GM12878 (cell line): ENCODE measurements at regions of chr2 and their contacts with region 1.

Region 1: GRCh38 chr2:64330281-64331113 is 123.5 kb upstream of the LGALSL start:
- DNase-seq: no peak
- ATAC-seq: peak; percentile 22
- H3K4me3 ChIP-seq: no peak overlapping the region
- H3K27ac ChIP-seq: no peak overlapping the region
- H3K4me1 ChIP-seq: peaks cover 41% of the 10 kb centered on the region
- H3K27me3 ChIP-seq: no peaks in the 10 kb centered on the region
- CTCF ChIP-seq: peak; percentile 82 to 92 (median 91)
- EP300 ChIP-seq: no peak
- POLR2A ChIP-seq: no peak
- RAD21 ChIP-seq: peak; percentile 97

Region 2: DNA sequence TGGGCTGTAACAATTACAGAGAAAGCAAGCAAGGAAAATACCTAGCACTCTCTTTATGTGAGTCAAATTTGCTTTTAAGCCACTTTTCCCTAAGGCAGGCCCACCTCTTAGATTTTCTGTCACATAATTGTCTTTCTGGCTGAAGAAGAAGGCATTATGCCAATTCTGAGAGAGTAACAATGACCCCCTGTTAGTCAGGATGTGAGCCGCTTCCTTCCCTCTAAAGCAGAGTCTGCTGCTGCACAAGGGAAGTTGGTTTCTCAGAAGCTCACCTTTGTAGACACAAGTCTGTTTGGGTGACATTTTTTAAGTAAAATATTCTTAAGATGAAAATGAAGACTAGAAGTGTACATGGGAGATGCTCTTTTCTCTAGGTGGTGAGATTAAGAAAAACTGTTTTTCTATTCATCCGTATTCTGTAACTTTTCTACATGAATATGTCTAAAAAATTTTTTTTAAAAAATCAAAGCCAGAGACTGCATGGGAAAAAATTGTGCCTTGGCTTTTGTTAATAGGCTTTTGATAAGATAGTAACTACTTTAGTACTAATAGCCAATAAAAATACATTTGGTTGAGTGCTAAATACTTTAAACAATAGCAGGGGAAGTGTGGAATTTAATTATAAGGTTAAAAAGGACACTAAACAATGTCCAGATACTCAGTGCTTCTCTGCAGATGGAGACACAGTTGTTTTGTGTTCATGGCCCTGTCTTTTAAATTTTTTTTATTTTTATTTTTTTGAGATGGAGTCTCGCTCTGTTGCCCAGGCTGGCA is 277.8 kb before region 1 on chr2:
- CTCF ChIA-PET with region 1: interaction called, 420 read pairs
- POLR2A ChIA-PET with region 1: interaction called, 25 read pairs
- RAD21 ChIA-PET with region 1: interaction called, 358 read pairs
- SMC1A ChIA-PET with region 1: interaction called, 333 read pairs
- in situ Hi-C with region 1: loop called (anchors 5 kb)
- intact Hi-C with region 1: loop called (anchors 1 kb)
- DNase-seq: no peak
- ATAC-seq: no peak
- H3K4me3 ChIP-seq: no peak overlapping the region
- H3K27ac ChIP-seq: no peak overlapping the region
- H3K4me1 ChIP-seq: peaks cover 25% of the 10 kb centered on the region
- H3K27me3 ChIP-seq: no peaks in the 10 kb centered on the region
- CTCF ChIP-seq: no peak
- EP300 ChIP-seq: no peak
- POLR2A ChIP-seq: no peak
- RAD21 ChIP-seq: no peak

Region 3: DNA sequence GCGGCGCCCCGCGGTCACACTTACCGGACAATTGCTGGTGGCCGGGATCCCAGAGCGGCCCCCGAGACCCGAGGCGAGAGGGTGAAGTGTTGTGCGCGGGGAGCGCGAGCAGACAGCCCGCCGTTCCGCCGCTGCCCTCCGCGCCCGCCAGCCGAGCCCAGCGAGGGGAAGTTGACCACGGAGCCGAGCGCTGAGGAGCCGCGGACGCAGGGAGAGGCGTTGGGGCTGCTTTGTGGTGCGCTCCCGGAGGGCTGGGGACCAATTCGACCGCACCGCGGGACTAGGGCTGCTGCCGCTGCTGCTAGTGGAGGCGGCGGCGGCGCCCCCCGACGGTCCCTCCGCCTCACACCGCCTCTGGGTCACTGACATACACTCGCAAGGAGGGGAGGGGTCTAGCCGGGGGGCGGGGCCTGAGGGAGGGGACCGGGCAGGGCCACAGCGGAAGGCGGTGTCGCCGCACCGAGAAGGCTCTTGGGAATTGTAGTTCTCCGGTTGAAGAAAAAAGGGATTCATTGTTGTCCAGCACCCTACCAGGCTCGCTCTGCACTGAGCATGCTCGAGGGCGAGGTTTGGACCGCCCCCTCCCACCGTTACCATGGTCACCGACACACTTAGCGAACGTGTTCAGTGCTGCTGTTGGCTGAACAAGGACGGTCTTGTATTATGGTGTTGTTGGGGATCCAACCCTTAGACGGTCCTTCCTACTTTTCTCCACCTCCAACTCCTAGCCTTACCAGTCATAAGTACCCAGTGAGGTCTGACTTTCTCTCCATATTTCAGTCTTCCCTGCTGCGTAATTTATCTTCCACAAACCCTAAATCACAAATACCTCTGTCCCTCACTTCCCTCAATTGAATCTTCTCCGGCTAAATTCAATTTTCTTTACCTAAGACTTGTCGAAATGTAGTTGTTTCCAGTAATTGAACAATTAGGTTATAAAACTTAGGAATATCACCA is 186.2 kb before region 1 on chr2 and contains the start of gene PELI1:
- CTCF ChIA-PET with region 1: interaction called, 35 read pairs
- POLR2A ChIA-PET with region 1: interaction called, 7 read pairs
- RAD21 ChIA-PET with region 1: interaction called, 75 read pairs
- SMC1A ChIA-PET with region 1: interaction called, 59 read pairs
- in situ Hi-C with region 1: loop called (anchors 5 kb)
- intact Hi-C with region 1: loop called (anchors 2 kb)
- DNase-seq: peak; percentile 96
- ATAC-seq: peak; percentile 86
- H3K4me3 ChIP-seq: peak within 1 kb of the TSS; percentile 95
- H3K27ac ChIP-seq: peak within 1 kb of the TSS; percentile 85
- H3K4me1 ChIP-seq: peaks cover 3% of the 10 kb centered on the region
- H3K27me3 ChIP-seq: no peaks in the 10 kb centered on the region
- CTCF ChIP-seq: peak; percentile 13 to 49 (median 34); a peak in 3 of 6 replicates
- EP300 ChIP-seq: no peak
- POLR2A ChIP-seq: peak; percentile 97
- RAD21 ChIP-seq: peak; percentile 36; the same call in 1 of the 2 replicates
- polyA plus RNA-seq, gene PELI1: 12.1 to 13.2 TPM

Region 4: DNA sequence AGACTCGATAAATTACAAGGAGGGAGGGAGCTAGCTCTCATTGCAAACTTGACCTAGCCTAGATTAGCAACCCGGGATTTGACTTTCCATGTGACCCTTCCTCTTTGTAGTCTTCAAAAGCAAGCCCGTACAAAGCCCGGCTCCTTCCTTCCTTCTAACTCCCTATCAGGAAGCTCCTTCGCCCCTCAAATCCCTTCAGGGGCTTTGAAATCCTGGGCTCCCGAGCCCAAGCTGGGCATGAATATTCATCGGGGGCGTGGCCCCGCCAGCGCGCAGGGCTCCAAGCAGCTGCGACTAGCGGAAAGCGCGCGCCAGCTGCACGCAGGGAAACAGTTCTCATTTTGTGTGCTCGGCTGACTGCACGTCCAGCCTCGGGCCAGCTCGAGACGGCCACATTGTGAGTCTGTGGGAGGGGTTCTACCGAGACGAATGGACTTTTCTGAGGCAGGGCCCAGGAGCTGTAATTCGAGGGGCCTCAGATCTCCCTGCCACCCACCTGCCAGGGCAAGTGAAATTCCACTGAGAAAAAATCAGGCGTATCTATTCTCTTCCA is 102.3 kb before region 1 on chr2:
- CTCF ChIA-PET with region 1: interaction called, 6 read pairs
- POLR2A ChIA-PET with region 1: no interaction called
- RAD21 ChIA-PET with region 1: interaction called, 31 read pairs
- SMC1A ChIA-PET with region 1: interaction called, 21 read pairs
- in situ Hi-C with region 1: no loop called
- intact Hi-C with region 1: no loop called
- DNase-seq: peak; percentile 39
- ATAC-seq: peak; percentile 99
- H3K4me3 ChIP-seq: peak overlapping the region; percentile 56
- H3K27ac ChIP-seq: peak overlapping the region; percentile 34
- H3K4me1 ChIP-seq: peaks cover 5% of the 10 kb centered on the region
- H3K27me3 ChIP-seq: no peaks in the 10 kb centered on the region
- CTCF ChIP-seq: no peak
- EP300 ChIP-seq: no peak
- POLR2A ChIP-seq: peak; percentile 84
- RAD21 ChIP-seq: no peak

Region 5: GRCh38 chr2:64359892-64360657 is 29.6 kb after region 1 on chr2:
- CTCF ChIA-PET with region 1: interaction called, 28 read pairs
- POLR2A ChIA-PET with region 1: no interaction called
- RAD21 ChIA-PET with region 1: interaction called, 6 read pairs
- SMC1A ChIA-PET with region 1: interaction called, 15 read pairs
- in situ Hi-C with region 1: no loop called
- intact Hi-C with region 1: no loop called
- DNase-seq: no peak
- ATAC-seq: peak; percentile 95
- H3K4me3 ChIP-seq: no peak overlapping the region
- H3K27ac ChIP-seq: no peak overlapping the region
- H3K4me1 ChIP-seq: peaks cover 6% of the 10 kb centered on the region; the same call in 1 of the 2 replicates
- H3K27me3 ChIP-seq: no peaks in the 10 kb centered on the region; a peak in 1 of 4 replicates
- CTCF ChIP-seq: no peak
- EP300 ChIP-seq: no peak
- POLR2A ChIP-seq: no peak
- RAD21 ChIP-seq: no peak

Region 6: GRCh38 chr2:64523666-64524603 is 193.4 kb after region 1 on chr2 and contains the start of gene AFTPH:
- CTCF ChIA-PET with region 1: interaction called, 81 read pairs
- POLR2A ChIA-PET with region 1: interaction called, 20 read pairs
- RAD21 ChIA-PET with region 1: interaction called, 34 read pairs
- SMC1A ChIA-PET with region 1: interaction called, 44 read pairs
- in situ Hi-C with region 1: no loop called
- intact Hi-C with region 1: no loop called
- DNase-seq: peak; percentile 98
- ATAC-seq: peak; percentile 86
- H3K4me3 ChIP-seq: peak within 1 kb of the TSS; percentile 95
- H3K27ac ChIP-seq: peak within 1 kb of the TSS; percentile 94
- H3K4me1 ChIP-seq: peaks cover 11% of the 10 kb centered on the region
- H3K27me3 ChIP-seq: no peaks in the 10 kb centered on the region
- CTCF ChIP-seq: no peak
- EP300 ChIP-seq: peak in 1 of 2 experiments; percentile 53; a peak in 2 of 4 replicates
- POLR2A ChIP-seq: peak; percentile 84
- RAD21 ChIP-seq: no peak
- polyA plus RNA-seq, gene AFTPH: 25.6 to 38.7 TPM

Region 7: GRCh38 chr2:64859312-64860212 is 529.1 kb after region 1 on chr2:
- CTCF ChIA-PET with region 1: interaction called, 9 read pairs
- POLR2A ChIA-PET with region 1: no interaction called
- RAD21 ChIA-PET with region 1: interaction called, 7 read pairs
- SMC1A ChIA-PET with region 1: interaction called, 7 read pairs
- in situ Hi-C with region 1: loop called (anchors 5 kb)
- intact Hi-C with region 1: loop called (anchors 2 kb)
- DNase-seq: no peak
- ATAC-seq: peak; percentile 53
- H3K4me3 ChIP-seq: peak overlapping the region; percentile 65
- H3K27ac ChIP-seq: peak overlapping the region; percentile 91
- H3K4me1 ChIP-seq: peaks cover 54% of the 10 kb centered on the region
- H3K27me3 ChIP-seq: no peaks in the 10 kb centered on the region
- CTCF ChIP-seq: no peak
- EP300 ChIP-seq: no peak
- POLR2A ChIP-seq: peak; percentile 40
- RAD21 ChIP-seq: no peak